ENCODE measurements at regions of chr7 and their contacts with region 1.

Region 1: DNA sequence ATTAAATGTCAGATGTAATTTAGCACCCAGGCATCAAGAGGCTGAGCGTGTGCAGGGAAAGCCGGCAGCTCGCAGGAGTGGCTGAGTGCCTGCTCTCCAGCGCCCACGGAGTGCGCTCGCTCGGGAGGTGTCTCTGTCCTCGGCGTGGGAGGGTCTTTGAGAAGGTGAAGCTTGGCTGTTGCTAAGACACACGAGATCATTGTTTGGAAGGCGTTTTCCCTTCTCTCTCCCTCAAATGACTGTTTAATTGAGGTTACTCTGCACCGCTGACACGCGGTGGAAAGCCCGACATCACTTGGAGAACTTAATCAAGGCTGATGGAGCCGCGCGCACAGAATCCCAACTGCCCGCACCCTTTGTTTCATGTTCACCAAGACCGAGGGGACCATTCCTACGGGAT is 414.6 kb downstream of the DNAJB6 start:
- DNase-seq: no peak
- H3K4me3 ChIP-seq: no peak overlapping the region
- H3K27ac ChIP-seq: no peak overlapping the region
- H3K4me1 ChIP-seq: peaks cover 5% of the 10 kb centered on the region
- H3K27me3 ChIP-seq: no peaks in the 10 kb centered on the region
- CTCF ChIP-seq: no peak
- EP300 ChIP-seq: no peak
- POLR2A ChIP-seq: no peak

Region 2: DNA sequence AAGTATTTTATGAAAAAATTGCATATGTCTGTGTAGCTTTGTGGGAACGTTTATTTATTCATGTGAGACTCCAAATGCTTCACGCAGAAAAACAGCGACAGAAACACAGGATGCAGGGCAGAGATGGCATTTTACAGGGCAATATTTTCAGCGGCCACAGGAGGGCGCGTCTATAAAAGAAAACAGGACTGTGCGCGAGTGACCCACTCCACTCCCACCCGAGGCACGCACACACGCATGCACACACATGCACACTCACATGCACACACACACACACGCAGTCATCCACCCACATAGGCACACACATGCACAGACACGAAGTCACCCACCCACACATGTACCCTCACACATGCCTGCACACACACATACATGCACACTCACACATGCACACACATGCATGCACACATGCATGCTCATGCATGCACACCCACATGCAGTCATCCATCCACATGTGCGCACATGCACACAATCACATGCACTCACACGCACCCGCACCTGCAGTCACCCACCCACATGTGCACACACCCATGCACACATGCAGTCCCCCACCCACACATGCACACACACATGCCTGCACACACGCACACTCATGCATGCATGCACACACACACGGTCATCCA is 318.3 kb before region 1 on chr7:
- intact Hi-C with region 1: loop called in 1 of 4 experiments (anchors 10 kb)
- DNase-seq: peak in 3 of 5 donors; percentile 6 to 67 (median 42)
- H3K4me3 ChIP-seq: no peak overlapping the region
- H3K27ac ChIP-seq: no peak overlapping the region
- H3K4me1 ChIP-seq: peaks cover 5% of the 10 kb centered on the region
- H3K27me3 ChIP-seq: no peaks in the 10 kb centered on the region
- CTCF ChIP-seq: peak in 2 of 3 donors; percentile 21 to 43
- EP300 ChIP-seq: no peak
- POLR2A ChIP-seq: no peak

Region 3: GRCh38 chr7:157684157-157684908 is 67.1 kb before region 1 on chr7:
- intact Hi-C with region 1: no loop called
- DNase-seq: peak in 1 of 5 donors; percentile 20
- H3K4me3 ChIP-seq: no peak overlapping the region
- H3K27ac ChIP-seq: no peak overlapping the region
- H3K4me1 ChIP-seq: no peaks in the 10 kb centered on the region
- H3K27me3 ChIP-seq: peaks cover 2% of the 10 kb centered on the region
- CTCF ChIP-seq: no peak
- EP300 ChIP-seq: no peak
- POLR2A ChIP-seq: no peak